Posterior vena cava (tissue), 2 donors: ENCODE measurements at regions of chr12 and their contacts with region 1.

Region 1: GRCh38 chr12:6563448-6564050 is 4.5 kb downstream of the NOP2 start:
- DNase-seq: no peak

Region 2: GRCh38 chr12:6493497-6494257 is 69.9 kb before region 1 on chr12 and contains the start of gene NCAPD2:
- intact Hi-C with region 1: no loop called
- DNase-seq: peak; percentile 98
- total RNA-seq, gene NCAPD2: 14.4 to 16.3 TPM

Region 3: DNA sequence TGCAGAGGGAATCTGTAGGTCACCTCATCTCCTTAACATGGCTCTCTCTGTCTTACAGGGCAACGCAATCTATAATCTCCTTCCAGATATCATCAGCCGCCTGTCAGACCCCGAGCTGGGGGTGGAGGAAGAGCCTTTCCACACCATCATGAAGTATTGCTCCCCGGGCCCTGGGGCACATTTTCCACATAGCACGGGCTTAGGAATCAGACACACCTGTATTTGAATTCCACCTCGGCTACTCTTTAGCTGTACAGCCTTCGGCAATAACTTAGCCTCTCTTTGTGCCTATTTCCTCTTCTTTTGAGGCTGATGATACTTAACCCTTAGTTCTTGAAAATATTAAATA is 34.7 kb before region 1 on chr12:
- intact Hi-C with region 1: loop called in 1 of 2 experiments (anchors 1 kb)
- DNase-seq: no peak

Region 4: GRCh38 chr12:6603095-6603567 is 39.6 kb after region 1 on chr12:
- intact Hi-C with region 1: loop called in 1 of 2 experiments (anchors 5 kb)
- DNase-seq: peak; percentile 80

Region 5: DNA sequence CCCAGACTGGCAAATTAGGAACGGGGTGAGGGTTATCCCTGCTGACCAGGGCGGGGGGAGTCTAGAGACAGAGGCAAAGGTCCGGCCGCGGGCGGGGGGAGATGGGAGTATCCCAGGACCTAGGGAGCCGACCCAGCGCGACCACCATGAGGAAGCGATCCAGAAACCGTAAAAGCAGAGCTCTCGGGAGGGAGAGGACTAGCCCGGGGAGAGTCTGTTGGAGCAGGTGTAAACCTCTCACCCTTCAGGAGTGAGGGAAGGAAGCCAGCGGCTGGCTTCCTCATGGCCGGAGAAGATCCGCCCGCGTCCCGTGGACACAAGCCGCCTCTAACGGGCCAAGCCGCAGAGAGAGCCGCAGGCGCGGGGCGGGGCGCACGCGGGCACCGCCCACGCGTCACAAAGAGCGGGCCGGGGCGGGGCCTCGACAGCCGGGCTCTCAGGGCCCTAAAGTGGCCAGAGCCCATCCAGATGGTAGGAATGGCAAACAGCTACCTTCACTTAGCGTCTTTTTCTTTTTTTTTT is 83.6 kb after region 1 on chr12 and contains the start of gene ACRBP:
- intact Hi-C with region 1: loop called in 1 of 2 experiments (anchors 10 kb)
- DNase-seq: peak; percentile 94
- total RNA-seq, gene ACRBP: 1.3 to 2.2 TPM

Region 6: DNA sequence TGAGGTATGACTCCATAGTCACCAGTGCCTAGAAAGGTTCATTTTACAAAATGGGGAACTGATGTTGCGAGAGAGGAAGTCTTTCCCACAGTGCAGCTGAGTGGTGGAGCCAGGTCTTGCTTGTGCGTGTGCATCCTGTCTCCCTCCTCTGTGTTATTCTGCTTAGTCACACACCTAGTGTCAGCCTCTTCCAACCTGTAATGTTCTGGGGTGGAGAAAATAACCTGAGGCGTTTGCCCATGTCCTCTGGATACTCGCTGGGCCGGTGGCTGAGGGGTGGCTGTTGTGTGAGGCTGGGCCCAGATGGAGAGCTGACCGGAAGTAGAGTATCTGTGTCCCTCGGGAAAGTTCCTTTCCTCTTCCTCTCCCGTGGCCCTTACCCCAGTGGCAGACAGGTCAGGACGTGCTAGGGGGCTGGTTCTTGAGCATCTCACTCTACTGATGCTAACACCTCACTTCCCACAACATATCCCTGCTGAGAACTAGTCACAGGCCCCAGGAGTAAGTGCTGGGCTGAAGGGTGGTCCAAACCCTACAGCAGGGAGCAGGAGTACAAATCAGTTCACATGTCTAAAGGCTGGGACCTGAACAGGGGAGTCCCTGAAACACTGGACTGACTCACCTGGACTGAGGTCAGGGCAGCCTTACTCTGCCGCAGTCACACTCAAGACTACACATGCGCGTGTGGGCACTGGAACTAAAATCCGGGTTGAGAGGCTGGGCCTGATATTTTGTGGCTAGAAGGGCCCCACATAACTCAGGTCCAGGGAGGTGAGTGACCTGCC is 182.4 kb after region 1 on chr12:
- intact Hi-C with region 1: no loop called
- DNase-seq: peak; percentile 72